Activated T-helper 2 cell treated with anti-CD3 and anti-CD28 coated beads, Interferon-gamma antibody, Interleukin-2, Interleukin-4, amounts not matched to agents 10 μg/mL and 5 μg/mL and 100 μg/mL, durations not matched to agents 14 hours and 24 hours and 36 hours (primary cell): ENCODE measurements at regions of chr2 and their contacts with region 1.

Region 1: GRCh38 chr2:231612179-231613053 is 19.8 kb downstream of the TEX44 start:
- DNase-seq: peak; percentile 87
- H3K4me3 Mint-ChIP-seq: peak overlapping the region; percentile 82
- H3K27ac Mint-ChIP-seq: peak overlapping the region; percentile 98
- H3K4me1 Mint-ChIP-seq: peaks cover 41% of the 10 kb centered on the region
- H3K27me3 Mint-ChIP-seq: no peaks in the 10 kb centered on the region

Region 2: GRCh38 chr2:231463698-231464575 is 148.5 kb before region 1 on chr2 and contains the start of gene NCL:
- intact Hi-C with region 1: loop called (anchors 1 kb)
- DNase-seq: peak; percentile 83
- H3K4me3 Mint-ChIP-seq: peak within 1 kb of the TSS; percentile 94
- H3K27ac Mint-ChIP-seq: peak within 1 kb of the TSS; percentile 98
- H3K4me1 Mint-ChIP-seq: peaks cover 31% of the 10 kb centered on the region
- H3K27me3 Mint-ChIP-seq: no peaks in the 10 kb centered on the region
- total RNA-seq, gene NCL: 1,292 and 1,329 TPM in 2 replicates

Region 3: GRCh38 chr2:231662028-231662810 is 49.8 kb after region 1 on chr2:
- intact Hi-C with region 1: loop called (anchors 1 kb)
- DNase-seq: peak; percentile 98
- H3K4me3 Mint-ChIP-seq: peak overlapping the region; percentile 56
- H3K27ac Mint-ChIP-seq: peak overlapping the region; percentile 93
- H3K4me1 Mint-ChIP-seq: peaks cover 14% of the 10 kb centered on the region
- H3K27me3 Mint-ChIP-seq: no peaks in the 10 kb centered on the region

Region 4: DNA sequence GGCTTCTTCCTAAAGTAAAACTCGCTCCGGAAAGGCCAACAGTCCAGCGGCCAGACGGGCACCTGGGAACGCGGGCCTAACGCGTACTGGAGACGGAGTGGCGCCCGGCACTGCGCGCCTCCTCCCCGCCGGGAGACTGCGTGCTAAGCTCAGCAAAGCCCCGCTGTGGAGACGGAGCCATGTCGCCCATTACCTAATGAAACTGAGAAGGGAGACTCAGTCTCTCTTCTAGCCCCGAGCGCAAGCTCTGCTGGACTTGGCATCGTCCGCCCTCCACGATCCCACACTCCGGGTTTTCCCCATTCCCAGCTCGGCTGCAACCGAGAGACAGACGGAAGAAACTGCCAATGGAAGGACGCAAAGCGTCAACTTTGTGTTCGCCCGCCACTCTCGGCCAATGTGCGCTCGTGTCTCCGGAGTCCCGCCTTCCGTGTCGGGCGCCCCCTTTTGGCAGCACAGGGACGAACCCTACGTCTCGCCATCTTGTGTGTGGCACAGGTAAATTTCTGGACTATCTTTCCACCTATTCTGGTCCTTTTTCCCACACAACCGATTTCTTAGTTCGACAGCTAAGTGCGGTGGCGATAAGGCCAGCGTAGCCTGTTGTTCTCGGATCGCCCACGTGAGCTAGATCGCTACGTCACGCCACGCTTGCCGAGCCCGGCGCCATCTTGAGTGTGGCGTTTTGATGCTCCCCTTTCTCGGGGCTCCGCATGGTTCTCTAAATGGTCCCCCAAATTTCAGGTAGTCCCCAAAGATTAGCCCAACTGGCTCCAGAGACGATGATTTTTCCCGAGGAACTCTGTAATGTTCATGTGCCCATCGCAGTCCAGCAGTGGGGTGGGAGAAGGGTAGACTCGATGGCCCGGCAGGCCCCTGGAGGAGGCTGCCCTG is 94.6 kb after region 1 on chr2:
- intact Hi-C with region 1: loop called (anchors 1 kb)
- DNase-seq: peak; percentile 97
- H3K4me3 Mint-ChIP-seq: peak overlapping the region; percentile 94
- H3K27ac Mint-ChIP-seq: peak overlapping the region; percentile 100
- H3K4me1 Mint-ChIP-seq: peaks cover 13% of the 10 kb centered on the region
- H3K27me3 Mint-ChIP-seq: no peaks in the 10 kb centered on the region

Region 5: DNA sequence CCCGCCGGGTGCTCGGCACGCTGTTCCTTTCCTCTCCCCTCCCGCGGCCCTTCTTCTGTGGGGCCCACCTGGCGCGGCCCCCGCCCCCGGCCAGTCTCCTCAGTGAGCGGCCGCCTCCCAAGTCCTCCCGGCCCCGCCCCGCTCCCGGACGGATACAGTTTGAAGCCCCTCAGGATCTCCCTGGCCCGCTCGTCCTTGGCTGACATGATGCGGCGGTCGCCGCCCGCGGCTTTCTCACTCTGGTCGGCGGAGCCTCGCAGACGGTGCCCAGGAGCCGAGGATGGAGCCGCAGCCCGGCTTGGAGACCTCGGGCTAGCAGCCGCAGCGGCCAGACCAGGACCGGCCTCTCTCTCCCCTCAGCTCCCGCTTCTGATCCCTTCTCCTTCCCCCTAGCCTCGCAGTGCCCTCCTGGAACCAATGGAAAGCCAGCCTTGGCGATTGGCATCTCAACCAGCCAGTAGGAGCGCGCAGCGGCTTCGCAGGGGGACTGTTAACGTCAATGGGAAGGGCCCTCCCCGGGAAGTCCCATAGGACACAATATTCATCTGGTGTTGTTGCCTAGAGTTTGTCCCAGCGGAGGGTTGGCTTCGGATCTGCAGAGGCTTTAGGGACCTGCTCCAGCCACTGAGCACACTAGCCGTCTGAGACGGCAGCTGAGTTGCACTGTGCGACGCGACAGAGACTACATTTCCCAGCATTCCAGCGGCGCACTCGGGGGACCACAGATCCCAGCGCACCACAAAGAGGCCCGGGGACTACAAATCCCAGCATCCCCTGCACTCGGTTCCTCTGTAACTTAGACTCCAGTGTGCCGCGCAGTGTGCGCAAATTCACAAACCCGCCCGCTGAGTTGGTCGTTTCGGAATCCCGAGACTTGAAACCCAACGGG is 168.7 kb after region 1 on chr2 and contains the start of gene PDE6D:
- intact Hi-C with region 1: loop called (anchors 1 kb)
- DNase-seq: peak; percentile 97
- H3K4me3 Mint-ChIP-seq: peak within 1 kb of the TSS; percentile 97
- H3K27ac Mint-ChIP-seq: peak within 1 kb of the TSS; percentile 93
- H3K4me1 Mint-ChIP-seq: peaks cover 45% of the 10 kb centered on the region
- H3K27me3 Mint-ChIP-seq: no peaks in the 10 kb centered on the region
- total RNA-seq, gene PDE6D: 35.5 and 35.6 TPM in 2 replicates